ENCODE measurements at regions of chr11 and their contacts with region 1.

Region 1: DNA sequence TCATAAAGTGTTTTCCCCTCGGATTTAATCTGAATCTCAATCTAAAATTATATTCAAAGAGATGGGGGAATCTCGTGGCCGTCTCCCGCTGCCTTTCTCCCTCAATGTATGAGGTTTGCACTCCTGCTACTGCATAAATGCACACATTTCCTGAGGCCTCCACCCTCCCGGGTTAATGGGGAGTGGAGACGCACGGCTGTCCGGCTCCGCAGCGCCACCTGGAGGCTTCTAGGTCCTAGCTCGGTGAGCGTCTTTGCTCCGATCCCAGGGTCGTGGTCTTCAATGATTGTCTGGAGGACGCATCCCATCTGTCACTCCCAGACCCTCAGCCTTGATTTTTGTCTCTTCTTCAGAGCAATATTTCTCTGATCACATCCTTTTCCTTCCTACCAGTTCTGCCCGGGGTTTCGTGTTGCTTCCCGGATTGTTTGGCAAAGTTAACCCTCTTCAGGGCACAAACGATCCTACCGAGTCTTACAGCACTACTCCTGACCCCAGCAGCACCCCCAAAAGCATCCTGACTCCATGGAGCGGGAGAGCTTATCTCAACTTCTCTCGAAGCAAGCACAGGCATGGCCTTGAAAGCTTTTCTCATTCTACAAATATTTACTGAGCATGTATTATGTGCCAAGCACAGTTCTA is at the start of gene LMO1:
- DNase-seq: peak; percentile 65 to 72
- ATAC-seq: peak; percentile 50 to 64
- H3K4me3 ChIP-seq: peak within 1 kb of the TSS; percentile 52 to 70 (median 58)
- H3K27ac ChIP-seq: peak within 1 kb of the TSS; percentile 78 to 88 (median 81)
- H3K4me1 ChIP-seq: peaks cover 28 to 35% of the 10 kb centered on the region in 2 donors
- H3K27me3 ChIP-seq: peaks cover 24 to 32% (median 28%) of the 10 kb centered on the region in 3 donors
- CTCF ChIP-seq: peak; percentile 73 to 96 (median 88)
- POLR2A ChIP-seq: peak in 1 of 2 donors; percentile 31
- total RNA-seq, gene LMO1: 2.2 to 7.0 (median 2.5) TPM

Region 2: GRCh38 chr11:8060801-8061554 is 202.9 kb before region 1 on chr11:
- in situ Hi-C with region 1: no loop called
- intact Hi-C with region 1: no loop called
- DNase-seq: no peak
- ATAC-seq: no peak
- H3K4me3 ChIP-seq: no peak overlapping the region
- H3K27ac ChIP-seq: no peak overlapping the region
- H3K4me1 ChIP-seq: peaks cover 0 to 18% of the 10 kb centered on the region in 2 donors
- H3K27me3 ChIP-seq: no peaks in the 10 kb centered on the region
- CTCF ChIP-seq: no peak
- POLR2A ChIP-seq: no peak

Region 3: DNA sequence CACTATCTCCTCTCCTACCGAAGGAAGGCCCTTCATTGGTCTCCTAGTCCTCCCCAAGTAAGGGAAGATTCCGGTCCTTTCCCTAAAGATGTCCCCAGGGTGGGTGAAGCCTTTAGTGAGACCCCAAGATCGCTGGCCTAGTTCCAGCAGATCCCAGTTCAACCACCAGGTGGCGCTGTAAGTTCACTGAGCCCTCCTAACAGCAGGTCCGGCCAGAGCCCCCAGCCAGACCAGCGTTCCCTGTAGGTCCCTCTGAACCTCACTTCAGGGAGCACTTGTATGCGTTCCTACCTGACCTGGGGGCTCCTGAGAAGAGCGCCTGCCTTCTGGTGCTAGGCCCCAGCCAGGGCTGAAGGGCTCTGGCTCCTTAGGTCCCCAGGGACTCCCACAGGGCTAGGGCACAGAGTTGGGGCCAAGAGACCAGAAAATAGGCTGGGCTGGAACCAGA is 38.3 kb before region 1 on chr11:
- in situ Hi-C with region 1: loop called in 1 of 4 experiments (anchors 5 kb)
- intact Hi-C with region 1: loop called (anchors 1 kb)
- DNase-seq: peak; percentile 43 to 62
- ATAC-seq: peak; percentile 58 to 81
- H3K4me3 ChIP-seq: no peak overlapping the region
- H3K27ac ChIP-seq: no peak overlapping the region
- H3K4me1 ChIP-seq: no peaks in the 10 kb centered on the region
- H3K27me3 ChIP-seq: no peaks in the 10 kb centered on the region
- CTCF ChIP-seq: peak; percentile 95
- POLR2A ChIP-seq: no peak

Region 4: GRCh38 chr11:8247312-8247711 is 16.6 kb before region 1 on chr11:
- in situ Hi-C with region 1: no loop called
- intact Hi-C with region 1: loop called (anchors 1 kb)
- DNase-seq: peak in 1 of 2 donors; percentile 54
- ATAC-seq: peak; percentile 74 to 81
- H3K4me3 ChIP-seq: no peak overlapping the region
- H3K27ac ChIP-seq: no peak overlapping the region
- H3K4me1 ChIP-seq: peaks cover 7 to 18% of the 10 kb centered on the region in 2 donors
- H3K27me3 ChIP-seq: no peaks in the 10 kb centered on the region
- CTCF ChIP-seq: peak; percentile 50 to 83 (median 79)
- POLR2A ChIP-seq: no peak

Region 5: DNA sequence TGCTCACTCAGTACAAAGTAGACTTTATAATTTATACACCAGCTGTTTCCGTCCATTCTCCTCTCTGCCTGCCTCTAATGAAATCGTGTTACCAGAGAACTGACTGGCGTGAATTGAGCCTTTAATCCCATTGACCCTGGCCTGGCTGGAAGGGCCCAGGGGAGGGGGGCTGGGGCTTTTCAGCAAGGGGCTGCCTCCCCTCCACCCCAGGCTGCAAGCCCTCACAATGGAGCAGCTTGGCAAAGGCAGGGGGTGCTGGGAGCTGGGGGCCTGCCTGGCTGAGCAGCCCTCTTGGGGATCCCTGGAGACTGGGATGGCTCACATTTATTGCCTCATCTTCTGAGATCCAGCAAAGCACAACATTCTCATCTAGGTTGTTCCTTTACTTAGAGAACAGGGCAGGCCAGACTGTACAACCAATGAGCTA is 25.6 kb after region 1 on chr11:
- in situ Hi-C with region 1: no loop called
- intact Hi-C with region 1: no loop called
- DNase-seq: no peak
- ATAC-seq: no peak
- H3K4me3 ChIP-seq: no peak overlapping the region
- H3K27ac ChIP-seq: no peak overlapping the region
- H3K4me1 ChIP-seq: no peaks in the 10 kb centered on the region
- H3K27me3 ChIP-seq: no peaks in the 10 kb centered on the region
- CTCF ChIP-seq: no peak
- POLR2A ChIP-seq: no peak

Measured in gastrocnemius medialis (tissue), 4 donors.